ENCODE measurements at regions of chr5 and their contacts with region 1.

Region 1: GRCh38 chr5:159581502-159582249 is 251.4 kb upstream of the IL12B start:
- DNase-seq: peak; percentile 100
- H3K4me3 Mint-ChIP-seq: no peak overlapping the region
- H3K27ac Mint-ChIP-seq: peak overlapping the region; percentile 91
- H3K4me1 Mint-ChIP-seq: peaks cover 29% of the 10 kb centered on the region
- H3K27me3 Mint-ChIP-seq: no peaks in the 10 kb centered on the region
- CTCF ChIP-seq: no peak

Region 2: GRCh38 chr5:159571495-159572238 is 10.0 kb before region 1 on chr5:
- CTCF ChIA-PET with region 1: interaction called, 8 read pairs
- POLR2A ChIA-PET with region 1: interaction called, 11 read pairs
- intact Hi-C with region 1: no loop called
- DNase-seq: peak; percentile 51
- H3K4me3 Mint-ChIP-seq: no peak overlapping the region
- H3K27ac Mint-ChIP-seq: no peak overlapping the region
- H3K4me1 Mint-ChIP-seq: peaks cover 5% of the 10 kb centered on the region
- H3K27me3 Mint-ChIP-seq: no peaks in the 10 kb centered on the region
- CTCF ChIP-seq: no peak

Region 3: GRCh38 chr5:159773062-159773924 is 191.6 kb after region 1 on chr5:
- CTCF ChIA-PET with region 1: interaction called, 4 read pairs
- POLR2A ChIA-PET with region 1: interaction called, 3 read pairs
- intact Hi-C with region 1: loop called (anchors 5 kb)
- DNase-seq: peak; percentile 93
- H3K4me3 Mint-ChIP-seq: peak overlapping the region; percentile 58
- H3K27ac Mint-ChIP-seq: no peak overlapping the region
- H3K4me1 Mint-ChIP-seq: peaks cover 8% of the 10 kb centered on the region
- H3K27me3 Mint-ChIP-seq: no peaks in the 10 kb centered on the region
- CTCF ChIP-seq: no peak

Region 4: DNA sequence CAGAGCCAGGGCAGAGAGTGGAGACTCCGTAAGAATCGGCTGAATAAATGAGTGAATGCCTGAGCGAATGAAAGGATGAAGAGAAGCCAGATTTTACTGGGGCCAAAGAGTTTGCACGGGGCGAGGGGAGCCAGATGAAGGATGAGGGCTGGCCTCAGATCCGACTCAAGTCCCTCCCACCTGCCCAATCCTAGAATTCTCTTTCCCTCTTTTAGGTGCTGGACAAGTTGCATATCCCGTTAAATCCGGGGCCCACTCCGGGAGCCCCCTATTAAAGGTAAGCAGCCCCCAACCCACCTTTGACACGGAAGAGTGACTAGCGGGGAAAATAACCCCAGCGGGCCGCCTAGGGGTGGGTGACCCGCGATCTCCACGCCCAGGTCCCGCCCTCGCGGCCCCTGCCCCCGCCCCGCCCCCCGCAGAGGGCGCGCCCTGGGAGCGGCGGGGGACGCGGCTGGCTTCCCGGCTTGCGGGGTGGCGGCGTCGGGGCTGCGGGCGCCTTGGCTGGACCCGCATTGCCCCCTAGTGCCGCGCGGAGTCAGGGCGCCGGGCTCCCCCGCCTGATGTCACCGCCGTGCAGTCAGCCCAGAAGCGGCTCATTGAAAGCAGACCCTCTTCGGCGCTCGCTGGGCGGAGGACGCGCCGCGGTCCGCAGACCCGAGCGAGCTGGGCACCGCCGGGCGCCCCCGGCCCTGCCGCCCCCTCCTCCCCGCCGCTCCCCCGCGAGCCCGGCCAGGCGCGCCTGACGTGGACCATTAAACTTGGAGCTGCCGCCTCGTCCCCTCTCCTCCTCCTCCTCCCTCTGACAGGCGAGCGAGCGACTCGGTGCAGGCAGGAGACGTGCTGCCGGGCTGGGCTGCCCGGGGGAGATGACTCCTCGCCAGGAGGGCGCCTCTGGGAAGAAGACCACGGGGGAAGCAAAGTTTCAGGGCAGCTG is 334.5 kb after region 1 on chr5 and contains the start of gene ADRA1B:
- CTCF ChIA-PET with region 1: interaction called, 7 read pairs
- POLR2A ChIA-PET with region 1: interaction called, 9 read pairs
- intact Hi-C with region 1: loop called (anchors 2 kb)
- DNase-seq: peak; percentile 55
- H3K4me3 Mint-ChIP-seq: peak within 1 kb of the TSS; percentile 44
- H3K27ac Mint-ChIP-seq: peak within 1 kb of the TSS; percentile 28
- H3K4me1 Mint-ChIP-seq: peaks cover 44% of the 10 kb centered on the region
- H3K27me3 Mint-ChIP-seq: no peaks in the 10 kb centered on the region
- CTCF ChIP-seq: peak; percentile 63
- total RNA-seq, gene ADRA1B: 0.14 TPM in 1 of 2 replicates, not detected in the other